MCF 10A (cell line): ENCODE measurements at regions of chr1 and their contacts with region 1.

Region 1: GRCh38 chr1:72282271-72283021 is at the start of gene NEGR1:
- DNase-seq: peak; percentile 94
- H3K4me3 Mint-ChIP-seq: no peak within 1 kb of the TSS
- H3K27ac Mint-ChIP-seq: peak within 1 kb of the TSS; percentile 0
- H3K4me1 Mint-ChIP-seq: peaks cover 13% of the 10 kb centered on the region
- H3K27me3 Mint-ChIP-seq: no peaks in the 10 kb centered on the region
- CTCF ChIP-seq: no peak
- total RNA-seq, gene NEGR1: 3.5 and 4.1 TPM in 2 replicates

Region 2: DNA sequence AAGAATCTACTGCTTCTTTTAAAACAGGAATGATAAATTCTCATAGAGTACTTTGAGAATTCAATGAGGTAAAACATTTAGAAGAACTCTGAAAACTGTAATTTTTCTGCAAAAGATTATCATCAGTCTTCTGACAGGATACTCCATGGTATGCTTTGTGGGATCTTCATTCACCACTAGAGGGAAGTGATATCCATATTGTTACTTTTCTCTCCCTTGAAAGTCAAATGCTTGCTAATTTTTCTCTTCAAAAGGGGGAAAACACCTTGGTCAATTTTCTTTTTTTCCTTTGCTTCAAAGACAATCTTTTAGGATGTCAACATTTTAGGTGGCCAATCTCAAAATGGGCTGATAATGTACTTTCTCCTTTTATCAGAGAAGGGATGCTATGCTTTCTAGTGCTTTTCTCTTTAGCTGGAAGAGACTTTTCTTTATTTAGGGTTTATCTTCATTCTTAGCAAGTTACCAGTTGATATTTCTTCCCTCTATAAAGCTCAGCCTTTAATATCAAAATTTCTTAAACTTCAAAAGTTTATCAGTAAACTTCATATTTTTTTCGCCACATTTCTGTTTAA is 95.6 kb before region 1 on chr1:
- CTCF ChIA-PET with region 1: interaction called, 9 read pairs
- POLR2A ChIA-PET with region 1: no interaction called
- intact Hi-C with region 1: loop called (anchors 2 kb)
- DNase-seq: peak; percentile 42
- H3K4me3 Mint-ChIP-seq: no peak overlapping the region
- H3K27ac Mint-ChIP-seq: no peak overlapping the region
- H3K4me1 Mint-ChIP-seq: no peaks in the 10 kb centered on the region
- H3K27me3 Mint-ChIP-seq: no peaks in the 10 kb centered on the region
- CTCF ChIP-seq: peak; percentile 55

Region 3: DNA sequence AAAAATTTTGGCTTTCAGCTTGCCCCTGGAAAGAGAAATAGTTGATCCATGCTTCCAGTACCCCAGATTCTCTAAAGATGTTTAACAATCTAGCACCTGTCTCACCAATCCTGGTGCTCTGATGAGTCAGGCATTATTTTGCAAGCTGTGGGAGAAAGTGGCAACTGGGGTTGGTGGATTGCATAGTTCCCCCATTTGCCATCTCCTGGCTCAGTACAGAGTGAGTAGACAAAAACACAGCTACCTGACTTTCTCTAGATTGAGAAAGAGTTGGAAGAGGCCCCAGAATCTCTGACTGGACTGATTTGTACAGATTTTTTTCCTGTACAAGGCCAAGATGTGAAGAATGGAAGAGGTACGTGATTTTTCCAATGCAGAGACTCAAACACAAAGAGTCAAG is 75.0 kb after region 1 on chr1:
- CTCF ChIA-PET with region 1: interaction called, 6 read pairs
- POLR2A ChIA-PET with region 1: interaction called, 9 read pairs
- intact Hi-C with region 1: loop called (anchors 1 kb)
- DNase-seq: peak; percentile 96
- H3K4me3 Mint-ChIP-seq: no peak overlapping the region
- H3K27ac Mint-ChIP-seq: peak overlapping the region; percentile 3
- H3K4me1 Mint-ChIP-seq: peaks cover 12% of the 10 kb centered on the region
- H3K27me3 Mint-ChIP-seq: no peaks in the 10 kb centered on the region
- CTCF ChIP-seq: no peak

Region 4: GRCh38 chr1:72498371-72498770 is 215.9 kb after region 1 on chr1:
- CTCF ChIA-PET with region 1: no interaction called
- POLR2A ChIA-PET with region 1: no interaction called
- intact Hi-C with region 1: loop called (anchors 10 kb)
- DNase-seq: peak; percentile 61
- H3K4me3 Mint-ChIP-seq: no peak overlapping the region
- H3K27ac Mint-ChIP-seq: no peak overlapping the region
- H3K4me1 Mint-ChIP-seq: peaks cover 5% of the 10 kb centered on the region
- H3K27me3 Mint-ChIP-seq: no peaks in the 10 kb centered on the region
- CTCF ChIP-seq: no peak

Region 5: GRCh38 chr1:72623299-72623708 is 340.9 kb after region 1 on chr1:
- CTCF ChIA-PET with region 1: interaction called, 4 read pairs
- POLR2A ChIA-PET with region 1: no interaction called
- intact Hi-C with region 1: loop called (anchors 2 kb)
- DNase-seq: peak; percentile 67
- H3K4me3 Mint-ChIP-seq: peak overlapping the region; percentile 24
- H3K27ac Mint-ChIP-seq: no peak overlapping the region
- H3K4me1 Mint-ChIP-seq: peaks cover 6% of the 10 kb centered on the region
- H3K27me3 Mint-ChIP-seq: peaks cover 21% of the 10 kb centered on the region
- CTCF ChIP-seq: peak; percentile 48

Region 6: GRCh38 chr1:72837781-72838180 is 555.3 kb after region 1 on chr1:
- CTCF ChIA-PET with region 1: no interaction called
- POLR2A ChIA-PET with region 1: no interaction called
- intact Hi-C with region 1: no loop called
- DNase-seq: peak; percentile 45
- H3K4me3 Mint-ChIP-seq: no peak overlapping the region
- H3K27ac Mint-ChIP-seq: peak overlapping the region; percentile 57
- H3K4me1 Mint-ChIP-seq: peaks cover 6% of the 10 kb centered on the region
- H3K27me3 Mint-ChIP-seq: no peaks in the 10 kb centered on the region
- CTCF ChIP-seq: no peak

Region 7: DNA sequence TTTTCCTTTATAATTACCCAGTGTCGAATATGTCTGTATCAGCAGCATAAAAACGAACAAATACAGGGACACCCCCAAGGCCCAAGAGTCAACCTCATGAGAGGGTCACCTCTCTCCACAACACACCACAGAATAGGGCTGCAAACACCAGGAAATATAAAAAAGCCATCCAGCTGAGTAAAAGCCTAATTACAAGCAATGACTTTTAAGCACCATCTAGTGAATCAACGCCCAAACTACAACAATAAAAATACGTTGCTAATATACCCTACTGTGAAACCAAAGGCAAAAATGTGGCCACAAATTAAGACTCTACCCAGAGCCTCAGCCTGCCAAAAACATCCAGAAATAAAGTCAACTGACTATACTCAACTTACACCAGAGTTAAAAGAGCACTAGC is 817.8 kb after region 1 on chr1:
- CTCF ChIA-PET with region 1: no interaction called
- POLR2A ChIA-PET with region 1: no interaction called
- intact Hi-C with region 1: loop called (anchors 1 kb)
- DNase-seq: peak; percentile 7
- H3K4me3 Mint-ChIP-seq: no peak overlapping the region
- H3K27ac Mint-ChIP-seq: no peak overlapping the region
- H3K4me1 Mint-ChIP-seq: no peaks in the 10 kb centered on the region
- H3K27me3 Mint-ChIP-seq: no peaks in the 10 kb centered on the region
- CTCF ChIP-seq: peak; percentile 37